IMR-90 (cell line): ENCODE measurements at regions of chr12 and their contacts with region 1.

Region 1: DNA sequence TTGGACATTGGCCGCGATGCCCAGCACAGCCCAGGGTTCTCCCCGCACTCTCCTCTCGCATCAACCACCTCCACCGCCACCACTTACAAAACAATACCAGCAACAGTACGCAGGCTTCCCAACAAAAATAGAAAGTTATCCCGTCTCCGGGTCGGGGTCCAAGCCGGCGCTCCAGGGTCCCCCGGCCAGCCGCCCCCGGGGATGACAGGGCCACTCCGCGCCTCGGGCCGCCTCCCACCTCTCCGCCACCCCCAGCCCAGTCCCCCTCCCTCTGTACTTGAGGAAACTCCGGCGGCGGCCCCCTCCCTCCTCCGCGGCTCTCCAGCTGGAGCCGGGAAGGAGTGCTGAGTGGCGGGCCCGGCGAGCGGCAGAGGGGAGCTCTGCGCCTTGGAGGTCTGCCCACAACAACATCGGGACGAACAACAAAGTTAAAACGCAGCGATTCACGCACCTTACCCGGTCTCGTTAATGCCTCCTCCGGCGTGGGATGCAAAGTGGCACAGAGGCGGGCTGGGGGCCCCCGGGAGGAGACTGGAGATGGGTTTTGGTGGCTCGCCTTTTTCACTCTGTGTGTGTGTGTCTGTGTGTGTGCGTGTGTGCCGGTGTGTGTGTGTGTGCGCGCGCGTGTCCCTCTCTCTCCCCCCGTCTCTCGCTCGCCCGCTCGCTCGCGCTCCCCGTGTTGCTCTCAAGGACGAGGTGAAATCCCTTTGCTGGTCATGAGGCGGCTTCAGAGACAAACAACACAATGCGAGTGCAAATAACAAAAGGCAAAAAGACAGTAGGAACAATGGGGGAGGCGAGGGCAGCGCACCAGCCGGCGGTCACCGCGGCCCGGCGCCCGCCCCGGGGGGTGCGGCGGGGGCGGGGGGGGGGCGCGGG is 386.8 kb downstream of the BCAT1 start:
- DNase-seq: peak; percentile 62
- ATAC-seq: peak; percentile 63
- H3K4me3 ChIP-seq: peak overlapping the region; percentile 98
- H3K27ac ChIP-seq: peak overlapping the region; percentile 98
- H3K4me1 ChIP-seq: peaks cover 5% of the 10 kb centered on the region; the same call in 1 of the 2 replicates
- H3K27me3 ChIP-seq: no peaks in the 10 kb centered on the region
- CTCF ChIP-seq: no peak
- POLR2A ChIP-seq: no peak
- RAD21 ChIP-seq: peak; percentile 11; the same call in 1 of the 2 replicates

Region 2: DNA sequence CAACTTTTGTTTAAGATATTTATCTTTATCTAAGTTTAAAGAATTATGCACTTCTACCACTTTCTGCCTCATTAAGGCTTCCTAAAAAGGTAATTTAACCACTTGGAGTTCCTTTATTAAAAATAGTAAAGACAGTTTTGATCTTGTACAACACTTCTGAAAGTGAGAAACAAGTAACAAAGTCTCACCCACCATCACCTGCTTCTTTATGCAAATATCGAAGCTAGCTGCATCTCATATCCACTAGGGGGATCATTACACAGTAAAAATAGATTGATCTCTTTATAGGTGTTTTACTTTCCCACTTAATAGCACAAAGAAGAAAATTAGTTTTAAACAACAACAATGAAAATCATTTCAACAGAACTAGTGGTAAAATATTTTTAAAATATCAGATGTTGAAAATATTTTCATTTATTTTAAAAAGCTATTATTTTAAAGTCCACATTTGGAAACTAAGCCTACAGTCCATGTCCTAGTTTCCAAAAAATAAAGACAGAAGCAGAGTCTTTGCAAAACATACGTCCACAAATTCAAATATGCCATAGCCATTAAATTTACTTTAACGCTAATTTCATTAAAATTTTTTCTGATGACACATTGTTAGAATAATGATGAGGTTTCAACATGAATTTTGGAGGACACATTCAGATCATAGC is 452.6 kb before region 1 on chr12:
- CTCF ChIA-PET with region 1: no interaction called
- POLR2A ChIA-PET with region 1: no interaction called
- dilution Hi-C with region 1: no loop called
- in situ Hi-C with region 1: loop called (anchors 25 kb)
- intact Hi-C with region 1: loop called (anchors 2 kb)
- DNase-seq: peak; percentile 32
- ATAC-seq: peak; percentile 42; the same call in 1 of the 2 replicates
- H3K4me3 ChIP-seq: no peak overlapping the region
- H3K27ac ChIP-seq: no peak overlapping the region
- H3K4me1 ChIP-seq: peaks cover 2% of the 10 kb centered on the region; the same call in 1 of the 2 replicates
- H3K27me3 ChIP-seq: no peaks in the 10 kb centered on the region
- CTCF ChIP-seq: peak; percentile 57
- POLR2A ChIP-seq: no peak
- RAD21 ChIP-seq: peak; percentile 54

Region 3: DNA sequence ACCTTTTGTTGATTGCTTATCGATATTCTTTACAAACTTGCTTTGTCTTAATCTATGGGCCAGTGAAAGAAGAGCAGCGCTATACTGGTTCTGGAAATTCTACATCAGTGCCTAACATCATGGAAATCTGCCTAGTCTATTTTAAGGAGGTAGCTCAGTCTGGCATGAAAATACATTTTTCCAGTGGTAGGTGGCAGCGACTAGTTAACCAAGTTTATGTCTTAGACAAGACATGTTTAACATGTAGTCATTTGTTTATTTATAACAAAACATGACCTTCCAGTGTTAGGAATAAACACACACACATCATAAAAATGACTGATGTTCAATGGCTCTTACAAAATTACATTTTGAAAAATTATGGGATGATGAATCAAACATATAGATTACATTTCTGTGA is 276.7 kb before region 1 on chr12:
- CTCF ChIA-PET with region 1: no interaction called
- POLR2A ChIA-PET with region 1: no interaction called
- dilution Hi-C with region 1: no loop called
- in situ Hi-C with region 1: no loop called
- intact Hi-C with region 1: loop called (anchors 5 kb)
- DNase-seq: peak; percentile 57
- ATAC-seq: peak; percentile 66
- H3K4me3 ChIP-seq: no peak overlapping the region
- H3K27ac ChIP-seq: no peak overlapping the region
- H3K4me1 ChIP-seq: 0 out of 2 replicates have a peak, but pooled peaks cover 2% of the 10 kb centered on the region
- H3K27me3 ChIP-seq: no peaks in the 10 kb centered on the region
- CTCF ChIP-seq: no peak
- POLR2A ChIP-seq: no peak
- RAD21 ChIP-seq: no peak

Region 4: DNA sequence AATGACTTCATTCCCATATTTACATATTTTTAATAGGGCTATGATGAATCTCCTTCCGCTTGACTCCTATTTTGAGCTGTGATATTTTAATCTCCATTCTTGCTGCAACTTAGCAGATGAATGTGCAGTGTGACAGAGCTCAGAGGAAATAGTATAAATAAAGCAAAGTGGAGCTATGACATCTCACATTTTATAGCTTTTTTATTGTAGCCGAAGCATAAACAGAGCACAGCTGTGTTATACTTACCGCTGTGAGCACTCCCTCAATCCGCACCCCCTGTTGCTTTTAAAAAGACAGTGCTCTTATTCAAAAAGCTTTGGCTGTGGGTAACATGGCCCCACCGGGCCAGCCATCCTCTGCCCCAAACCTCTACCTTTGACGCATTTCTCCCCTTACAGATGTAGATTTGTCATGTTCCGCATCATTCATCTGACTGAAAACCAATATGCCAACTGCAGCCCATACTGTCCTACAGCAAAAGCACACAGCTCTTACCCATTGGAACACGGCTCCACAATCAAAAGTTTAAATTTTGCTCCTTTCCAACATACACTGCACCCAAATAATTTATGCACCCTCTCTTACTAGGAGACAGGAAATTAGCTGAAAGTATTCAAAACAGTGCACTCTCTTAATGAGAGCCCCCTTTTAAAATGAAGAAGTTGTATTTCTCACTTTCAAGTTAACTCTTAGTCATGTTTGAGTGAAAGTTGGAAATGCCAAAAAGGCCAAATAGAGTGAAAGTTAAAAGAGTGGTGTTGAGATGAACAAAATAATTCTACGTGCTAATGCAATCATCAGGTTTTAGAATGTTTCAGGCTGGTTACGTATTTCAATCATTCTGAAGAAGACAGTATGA is 183.3 kb before region 1 on chr12:
- CTCF ChIA-PET with region 1: no interaction called
- POLR2A ChIA-PET with region 1: interaction called, 4 read pairs
- dilution Hi-C with region 1: no loop called
- in situ Hi-C with region 1: no loop called
- intact Hi-C with region 1: loop called (anchors 2 kb)
- DNase-seq: peak; percentile 96
- ATAC-seq: peak; percentile 96
- H3K4me3 ChIP-seq: no peak overlapping the region
- H3K27ac ChIP-seq: peak overlapping the region; percentile 86
- H3K4me1 ChIP-seq: peaks cover 17% of the 10 kb centered on the region
- H3K27me3 ChIP-seq: no peaks in the 10 kb centered on the region
- CTCF ChIP-seq: no peak
- POLR2A ChIP-seq: no peak
- RAD21 ChIP-seq: no peak

Region 5: GRCh38 chr12:24728366-24728765 is 166.2 kb after region 1 on chr12:
- CTCF ChIA-PET with region 1: no interaction called
- POLR2A ChIA-PET with region 1: no interaction called
- dilution Hi-C with region 1: no loop called
- in situ Hi-C with region 1: no loop called
- intact Hi-C with region 1: loop called (anchors 5 kb)
- DNase-seq: peak; percentile 55
- ATAC-seq: peak; percentile 74
- H3K4me3 ChIP-seq: no peak overlapping the region
- H3K27ac ChIP-seq: no peak overlapping the region
- H3K4me1 ChIP-seq: no peaks in the 10 kb centered on the region; the same call in 1 of the 2 replicates
- H3K27me3 ChIP-seq: no peaks in the 10 kb centered on the region
- CTCF ChIP-seq: peak; percentile 71
- POLR2A ChIP-seq: no peak
- RAD21 ChIP-seq: peak; percentile 78

Region 6: GRCh38 chr12:25811656-25812126 is 1249.6 kb after region 1 on chr12:
- CTCF ChIA-PET with region 1: no interaction called
- POLR2A ChIA-PET with region 1: no interaction called
- dilution Hi-C with region 1: no loop called
- in situ Hi-C with region 1: no loop called
- intact Hi-C with region 1: no loop called
- DNase-seq: peak; percentile 36
- ATAC-seq: no peak
- H3K4me3 ChIP-seq: no peak overlapping the region
- H3K27ac ChIP-seq: no peak overlapping the region
- H3K4me1 ChIP-seq: no peaks in the 10 kb centered on the region; the same call in 1 of the 2 replicates
- H3K27me3 ChIP-seq: no peaks in the 10 kb centered on the region
- CTCF ChIP-seq: no peak
- POLR2A ChIP-seq: no peak
- RAD21 ChIP-seq: no peak